Body of pancreas (tissue), 4 donors: ENCODE measurements at regions of chr1 and their contacts with region 1.

Region 1: GRCh38 chr1:8314346-8315280 is 3.3 kb upstream of the SLC45A1 start:
- DNase-seq: peak; percentile 87 to 90 (median 88)
- ATAC-seq: peak; percentile 75
- H3K4me3 ChIP-seq: no peak overlapping the region
- H3K27ac ChIP-seq: peak overlapping the region; percentile 21 to 94 (median 91)
- H3K4me1 ChIP-seq: peaks cover 49% of the 10 kb centered on the region
- H3K27me3 ChIP-seq: peaks cover 0 to 6% of the 10 kb centered on the region in 2 donors
- CTCF ChIP-seq: peak; percentile 72 to 99 (median 98)
- POLR2A ChIP-seq: no peak

Region 2: GRCh38 chr1:7983086-7983778 is 331.4 kb before region 1 on chr1:
- intact Hi-C with region 1: loop called (anchors 5 kb)
- DNase-seq: no peak
- ATAC-seq: no peak
- H3K4me3 ChIP-seq: no peak overlapping the region
- H3K27ac ChIP-seq: no peak overlapping the region
- H3K4me1 ChIP-seq: peaks cover 8% of the 10 kb centered on the region
- H3K27me3 ChIP-seq: no peaks in the 10 kb centered on the region
- CTCF ChIP-seq: no peak
- POLR2A ChIP-seq: no peak

Region 3: GRCh38 chr1:8259498-8260290 is 54.9 kb before region 1 on chr1:
- intact Hi-C with region 1: no loop called
- DNase-seq: peak; percentile 94 to 97 (median 96)
- ATAC-seq: peak; percentile 69
- H3K4me3 ChIP-seq: no peak overlapping the region
- H3K27ac ChIP-seq: peak overlapping the region; percentile 97 to 100 (median 98)
- H3K4me1 ChIP-seq: peaks cover 70% of the 10 kb centered on the region
- H3K27me3 ChIP-seq: no peaks in the 10 kb centered on the region
- CTCF ChIP-seq: no peak
- POLR2A ChIP-seq: peak in 2 of 3 donors; percentile 60 to 65